SK-N-SH (cell line): ENCODE measurements at regions of chr1 and their contacts with region 1.

Region 1: DNA sequence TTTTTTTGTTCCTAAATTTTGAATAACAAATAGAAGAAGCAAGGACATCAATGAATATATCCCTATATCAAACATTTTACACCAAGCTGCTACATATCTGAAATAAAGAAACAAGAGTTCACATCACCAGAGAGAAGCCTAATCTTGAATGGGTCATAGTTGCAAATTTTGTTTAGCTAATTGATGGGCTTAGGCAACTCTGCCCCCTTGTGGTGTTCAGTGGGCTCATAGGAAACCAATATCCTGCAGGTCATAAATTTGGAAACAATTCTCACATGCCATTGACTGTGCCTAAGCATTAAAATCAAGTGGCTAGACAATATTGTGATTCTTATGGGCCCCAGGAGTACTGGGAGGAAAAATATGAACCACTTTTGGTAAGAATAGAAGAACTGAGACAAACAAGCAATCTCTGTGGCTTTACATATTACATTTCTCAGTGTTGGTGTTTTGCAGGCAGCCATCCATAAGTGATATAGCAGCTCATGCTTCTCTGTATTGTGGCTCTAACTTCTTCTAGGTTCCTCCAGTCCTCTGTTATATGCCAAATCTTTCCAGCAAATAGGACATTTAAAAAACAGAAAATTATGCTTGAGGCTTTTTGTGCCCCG is 1262.8 kb upstream of the PRMT6 start:
- DNase-seq: peak; percentile 69
- H3K4me3 ChIP-seq: no peak overlapping the region; a peak in 1 of 4 replicates
- H3K27ac ChIP-seq: no peak overlapping the region
- H3K4me1 ChIP-seq: no peaks in the 10 kb centered on the region
- H3K27me3 ChIP-seq: no peaks in the 10 kb centered on the region
- CTCF ChIP-seq: peak; percentile 72
- EP300 ChIP-seq: no peak
- RAD21 ChIP-seq: peak; percentile 87

Region 2: GRCh38 chr1:104648269-104648691 is 1145.4 kb before region 1 on chr1:
- CTCF ChIA-PET with region 1: interaction called, 12 read pairs
- POLR2A ChIA-PET with region 1: no interaction called
- DNase-seq: peak; percentile 57
- H3K4me3 ChIP-seq: no peak overlapping the region; a peak in 1 of 4 replicates
- H3K27ac ChIP-seq: no peak overlapping the region
- H3K4me1 ChIP-seq: no peaks in the 10 kb centered on the region
- H3K27me3 ChIP-seq: no peaks in the 10 kb centered on the region
- CTCF ChIP-seq: peak; percentile 59
- EP300 ChIP-seq: no peak
- RAD21 ChIP-seq: peak; percentile 74

Region 3: DNA sequence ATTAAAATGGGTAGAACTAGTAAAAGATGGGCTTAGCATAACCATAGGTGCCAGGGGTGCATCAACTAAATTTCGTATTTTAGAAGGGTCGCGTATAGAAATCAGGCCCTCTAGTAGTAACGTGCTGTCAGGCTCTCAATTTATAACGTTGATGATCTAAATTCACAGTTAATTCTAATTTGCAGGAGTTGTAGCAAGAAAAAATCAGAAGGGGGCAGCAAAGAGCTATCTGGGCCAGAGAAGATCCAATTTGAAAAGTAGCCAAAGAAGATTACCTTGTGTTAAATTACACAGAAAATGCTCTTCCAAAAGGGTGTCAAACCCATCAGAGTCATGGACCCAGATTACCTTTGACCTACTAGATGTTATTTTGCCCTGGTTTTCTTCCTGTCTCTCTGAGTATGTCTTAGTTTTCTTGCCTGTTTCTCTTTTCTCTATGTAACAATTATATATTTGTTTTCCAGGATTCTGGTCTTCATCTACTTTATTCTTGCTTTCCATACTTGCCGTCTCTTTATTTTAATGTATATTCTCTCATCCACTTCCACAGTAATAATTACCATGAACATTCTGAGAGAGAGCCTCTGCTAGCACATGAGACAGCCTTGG is 1013.1 kb before region 1 on chr1:
- CTCF ChIA-PET with region 1: interaction called, 33 read pairs
- POLR2A ChIA-PET with region 1: no interaction called
- DNase-seq: peak; percentile 56
- H3K4me3 ChIP-seq: peak overlapping the region in 1 of 2 experiments; percentile 33; a peak in 1 of 4 replicates
- H3K27ac ChIP-seq: no peak overlapping the region
- H3K4me1 ChIP-seq: no peaks in the 10 kb centered on the region
- H3K27me3 ChIP-seq: no peaks in the 10 kb centered on the region
- CTCF ChIP-seq: peak; percentile 90
- EP300 ChIP-seq: no peak
- RAD21 ChIP-seq: peak; percentile 88

Region 4: GRCh38 chr1:104785575-104786187 is 1008.0 kb before region 1 on chr1:
- CTCF ChIA-PET with region 1: interaction called, 33 read pairs
- POLR2A ChIA-PET with region 1: no interaction called
- DNase-seq: no peak
- H3K4me3 ChIP-seq: no peak overlapping the region
- H3K27ac ChIP-seq: no peak overlapping the region
- H3K4me1 ChIP-seq: no peaks in the 10 kb centered on the region
- H3K27me3 ChIP-seq: no peaks in the 10 kb centered on the region
- CTCF ChIP-seq: no peak
- EP300 ChIP-seq: no peak
- RAD21 ChIP-seq: no peak

Region 5: GRCh38 chr1:105730701-105731100 is 62.9 kb before region 1 on chr1:
- CTCF ChIA-PET with region 1: no interaction called
- POLR2A ChIA-PET with region 1: no interaction called
- DNase-seq: no peak
- H3K4me3 ChIP-seq: no peak overlapping the region
- H3K27ac ChIP-seq: no peak overlapping the region
- H3K4me1 ChIP-seq: no peaks in the 10 kb centered on the region
- H3K27me3 ChIP-seq: no peaks in the 10 kb centered on the region
- CTCF ChIP-seq: no peak
- EP300 ChIP-seq: no peak
- RAD21 ChIP-seq: no peak